HAP-1 (cell line): ENCODE measurements at regions of chr5 and their contacts with region 1.

Region 1: GRCh38 chr5:34898258-34898895 is 16.9 kb downstream of the RAD1 start:
- DNase-seq: peak; percentile 70 to 75
- H3K4me3 ChIP-seq: no peak overlapping the region
- H3K4me1 ChIP-seq: no peaks in the 10 kb centered on the region; the same call in 1 of the 2 replicates
- H3K27me3 ChIP-seq: no peaks in the 10 kb centered on the region

Region 2: DNA sequence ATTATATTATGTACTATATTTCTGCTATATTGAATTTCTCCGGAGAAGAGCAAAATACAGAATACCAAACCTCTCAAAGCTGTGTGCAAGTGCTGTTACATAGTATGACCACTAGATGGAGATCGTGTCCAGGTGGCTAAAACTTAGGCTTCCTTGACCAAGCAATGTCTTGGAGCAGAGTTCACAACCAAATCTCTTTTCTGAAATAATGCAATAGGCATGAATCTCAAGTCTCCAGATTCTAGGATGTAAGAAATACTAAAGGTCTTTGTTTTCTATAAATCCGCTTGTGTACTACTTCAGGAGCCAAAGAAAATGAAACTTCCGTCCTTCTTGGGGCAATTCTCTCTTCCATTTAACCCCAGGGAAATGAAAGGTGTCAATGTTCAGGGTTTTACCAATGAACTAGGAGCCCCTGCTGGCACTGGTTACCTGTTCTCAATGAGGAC is 423.8 kb before region 1 on chr5:
- in situ Hi-C with region 1: loop called (anchors 5 kb)
- DNase-seq: peak; percentile 38 to 47
- H3K4me3 ChIP-seq: no peak overlapping the region
- H3K4me1 ChIP-seq: no peaks in the 10 kb centered on the region
- H3K27me3 ChIP-seq: no peaks in the 10 kb centered on the region

Region 3: GRCh38 chr5:34522599-34523386 is 375.6 kb before region 1 on chr5:
- in situ Hi-C with region 1: loop called (anchors 10 kb)
- DNase-seq: peak; percentile 65 to 78
- H3K4me3 ChIP-seq: no peak overlapping the region
- H3K4me1 ChIP-seq: no peaks in the 10 kb centered on the region
- H3K27me3 ChIP-seq: no peaks in the 10 kb centered on the region; the same call in 1 of the 2 replicates

Region 4: DNA sequence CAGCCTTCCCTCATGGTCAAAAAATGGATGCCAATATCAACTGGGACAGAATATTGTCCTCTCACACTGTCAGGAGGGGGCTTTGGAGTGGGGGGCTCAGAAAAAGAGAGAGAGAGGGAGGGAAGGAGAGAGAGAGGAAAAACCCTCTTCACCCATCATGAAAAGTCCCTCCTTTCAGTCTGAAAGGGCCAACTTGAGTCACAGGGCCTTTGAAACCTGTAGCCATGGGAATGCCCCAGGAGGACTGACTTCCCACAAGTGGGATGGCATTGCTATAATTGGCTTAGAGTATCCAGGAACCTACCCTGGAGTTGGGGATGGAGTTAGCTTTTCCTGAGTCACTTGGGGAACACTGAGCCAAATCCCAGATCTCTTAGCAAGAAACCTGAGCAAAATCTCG is 72.2 kb after region 1 on chr5:
- in situ Hi-C with region 1: no loop called
- DNase-seq: no peak
- H3K4me3 ChIP-seq: no peak overlapping the region
- H3K4me1 ChIP-seq: no peaks in the 10 kb centered on the region
- H3K27me3 ChIP-seq: no peaks in the 10 kb centered on the region